Activated B cell treated with CpG ODN at 0.5 μM for 24 hours (primary cell): ENCODE measurements at regions of chr19 and their contacts with region 1.

Region 1: DNA sequence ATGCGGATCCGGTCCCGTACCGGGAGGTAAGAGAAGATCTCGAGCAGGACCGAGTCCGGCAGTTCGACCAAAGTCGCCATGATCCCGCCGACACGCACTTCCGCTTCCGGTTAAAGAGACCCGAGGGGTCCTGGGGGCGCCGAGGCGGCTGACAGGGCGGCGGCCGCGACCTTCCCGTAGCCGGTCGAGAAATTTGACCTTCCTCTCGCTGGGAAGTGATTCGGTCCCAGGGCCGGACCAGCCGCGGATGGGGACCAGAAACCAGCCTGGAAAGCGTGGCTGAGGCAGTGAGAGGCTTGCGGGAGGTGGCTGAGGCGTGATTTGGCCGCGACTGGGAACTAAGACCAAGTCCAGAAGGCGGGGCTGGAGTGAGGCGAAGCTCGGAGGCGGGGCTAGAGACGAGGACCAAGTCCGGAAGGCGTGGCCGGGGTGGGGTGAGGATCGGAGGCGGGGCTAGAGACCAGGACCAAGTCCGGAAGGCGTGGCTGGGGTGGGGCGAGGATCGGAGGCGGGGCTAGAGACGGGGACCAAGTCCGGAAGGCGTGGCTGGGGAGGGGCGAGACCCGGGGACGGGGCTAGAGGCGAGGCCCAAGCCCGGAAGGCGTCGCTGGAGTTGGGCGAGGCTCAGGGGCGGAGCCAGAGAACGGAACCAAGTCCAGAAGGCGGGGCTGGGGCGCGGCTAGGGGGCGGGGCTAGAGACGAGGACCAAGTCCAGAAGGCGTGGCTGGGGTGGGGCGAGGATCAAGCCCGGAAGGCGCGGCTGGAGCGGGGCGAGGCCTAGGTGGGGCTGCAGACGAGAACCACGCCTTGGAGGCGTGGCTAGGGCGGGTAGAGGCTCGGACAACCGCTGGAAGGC is at the start of gene FBXL12:
- DNase-seq: peak; percentile 100
- ATAC-seq: peak; percentile 87
- H3K4me3 Mint-ChIP-seq: peak within 1 kb of the TSS; percentile 94
- H3K27ac Mint-ChIP-seq: peak within 1 kb of the TSS; percentile 92
- H3K4me1 Mint-ChIP-seq: peaks cover 24% of the 10 kb centered on the region
- H3K27me3 Mint-ChIP-seq: no peaks in the 10 kb centered on the region
- CTCF ChIP-seq: no peak
- total RNA-seq, gene FBXL12: 34.6 and 41.9 TPM in 2 replicates

Region 2: DNA sequence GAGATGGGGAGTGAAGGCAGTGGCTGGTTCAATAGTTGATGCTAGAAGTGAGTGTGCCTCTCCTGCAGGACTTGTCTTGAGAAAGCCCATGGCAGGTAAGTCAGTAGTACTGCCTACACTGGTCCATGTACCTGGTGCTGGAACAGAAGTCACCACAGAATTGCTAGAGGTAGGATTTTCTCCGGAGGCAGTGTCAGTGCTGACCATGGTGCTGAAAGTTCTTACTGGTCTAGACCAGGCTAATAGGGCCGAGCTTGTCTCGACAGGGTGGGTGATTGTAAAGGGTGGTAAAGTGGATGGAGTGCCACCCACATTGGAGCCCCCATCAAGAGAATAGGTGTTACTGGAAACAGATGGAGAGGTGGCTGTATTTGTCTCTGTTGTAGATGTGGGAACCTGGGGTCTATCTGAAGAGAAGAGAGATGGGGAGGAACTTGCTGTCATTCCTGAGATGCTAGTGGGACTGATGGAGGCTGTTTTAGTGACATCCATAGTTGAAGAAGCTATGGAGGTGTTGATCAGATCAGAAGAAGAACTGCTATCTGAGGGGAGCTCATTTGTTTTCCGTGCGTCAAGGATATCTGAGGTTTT is 845.4 kb before region 1 on chr19:
- CTCF ChIA-PET with region 1: no interaction called
- POLR2A ChIA-PET with region 1: interaction called, 13 read pairs
- intact Hi-C with region 1: no loop called
- DNase-seq: no peak
- ATAC-seq: no peak
- H3K4me3 Mint-ChIP-seq: no peak overlapping the region
- H3K27ac Mint-ChIP-seq: no peak overlapping the region
- H3K4me1 Mint-ChIP-seq: no peaks in the 10 kb centered on the region
- H3K27me3 Mint-ChIP-seq: peaks cover 2% of the 10 kb centered on the region
- CTCF ChIP-seq: no peak

Region 3: DNA sequence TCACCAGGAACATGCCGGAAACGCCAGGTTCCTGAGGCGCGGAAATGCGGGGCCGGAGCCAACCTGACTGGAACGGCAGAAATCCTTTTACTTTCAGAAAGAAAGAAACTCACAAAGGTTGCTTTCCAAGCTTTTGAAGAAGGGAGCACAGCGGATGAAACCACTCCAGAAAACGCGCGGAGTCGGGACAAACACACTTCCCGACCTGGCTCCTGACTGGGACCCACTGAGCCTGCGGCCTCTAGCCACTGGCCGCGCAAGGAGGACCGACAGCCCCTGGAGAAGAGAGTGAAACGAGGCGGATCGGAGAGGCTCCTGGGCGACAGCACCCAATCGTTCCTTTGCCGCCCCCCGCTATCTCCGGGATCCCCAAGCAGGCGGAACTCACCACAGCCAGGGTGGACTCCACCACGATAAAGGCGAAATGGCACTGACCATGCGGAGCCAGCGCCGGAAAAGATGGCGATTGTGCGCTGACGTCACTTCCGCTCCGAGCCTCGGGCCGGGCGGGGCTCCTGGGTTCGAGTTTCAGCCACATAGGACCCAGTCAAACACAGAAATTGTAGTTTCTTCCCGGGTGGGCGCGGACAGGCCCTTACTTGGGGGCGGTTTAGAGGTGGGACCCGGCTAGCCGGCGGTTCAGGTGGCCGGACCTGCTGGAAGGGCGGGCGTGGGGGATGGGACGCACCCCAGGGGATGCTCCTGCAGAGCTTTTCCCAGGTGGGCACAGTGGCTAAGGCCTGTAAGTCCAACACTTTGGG is 234.7 kb before region 1 on chr19 and contains the start of gene ZNF121:
- CTCF ChIA-PET with region 1: no interaction called
- POLR2A ChIA-PET with region 1: interaction called, 7 read pairs
- intact Hi-C with region 1: loop called (anchors 1 kb)
- DNase-seq: peak; percentile 80
- ATAC-seq: peak; percentile 84
- H3K4me3 Mint-ChIP-seq: peak within 1 kb of the TSS; percentile 95
- H3K27ac Mint-ChIP-seq: peak within 1 kb of the TSS; percentile 94
- H3K4me1 Mint-ChIP-seq: peaks cover 46% of the 10 kb centered on the region
- H3K27me3 Mint-ChIP-seq: peaks cover 6% of the 10 kb centered on the region
- CTCF ChIP-seq: no peak
- total RNA-seq, gene ZNF121: 53.7 and 57.0 TPM in 2 replicates

Region 4: GRCh38 chr19:9768175-9769112 is 50.5 kb before region 1 on chr19 and contains the start of gene ZNF846:
- CTCF ChIA-PET with region 1: no interaction called
- POLR2A ChIA-PET with region 1: interaction called, 16 read pairs
- intact Hi-C with region 1: loop called (anchors 1 kb)
- DNase-seq: peak; percentile 91
- ATAC-seq: peak; percentile 98
- H3K4me3 Mint-ChIP-seq: peak within 1 kb of the TSS; percentile 90
- H3K27ac Mint-ChIP-seq: peak within 1 kb of the TSS; percentile 94
- H3K4me1 Mint-ChIP-seq: peaks cover 9% of the 10 kb centered on the region
- H3K27me3 Mint-ChIP-seq: no peaks in the 10 kb centered on the region
- CTCF ChIP-seq: no peak
- total RNA-seq, gene ZNF846: 7.9 and 10.7 TPM in 2 replicates

Region 5: GRCh38 chr19:9834726-9835506 is 16.0 kb after region 1 on chr19 and contains the start of gene PIN1:
- CTCF ChIA-PET with region 1: no interaction called
- POLR2A ChIA-PET with region 1: interaction called, 11 read pairs
- intact Hi-C with region 1: loop called (anchors 1 kb)
- DNase-seq: peak; percentile 98
- ATAC-seq: peak; percentile 95
- H3K4me3 Mint-ChIP-seq: peak within 1 kb of the TSS; percentile 93
- H3K27ac Mint-ChIP-seq: peak within 1 kb of the TSS; percentile 94
- H3K4me1 Mint-ChIP-seq: peaks cover 12% of the 10 kb centered on the region
- H3K27me3 Mint-ChIP-seq: no peaks in the 10 kb centered on the region
- CTCF ChIP-seq: no peak
- total RNA-seq, gene PIN1: 57.1 and 66.0 TPM in 2 replicates

Region 6: DNA sequence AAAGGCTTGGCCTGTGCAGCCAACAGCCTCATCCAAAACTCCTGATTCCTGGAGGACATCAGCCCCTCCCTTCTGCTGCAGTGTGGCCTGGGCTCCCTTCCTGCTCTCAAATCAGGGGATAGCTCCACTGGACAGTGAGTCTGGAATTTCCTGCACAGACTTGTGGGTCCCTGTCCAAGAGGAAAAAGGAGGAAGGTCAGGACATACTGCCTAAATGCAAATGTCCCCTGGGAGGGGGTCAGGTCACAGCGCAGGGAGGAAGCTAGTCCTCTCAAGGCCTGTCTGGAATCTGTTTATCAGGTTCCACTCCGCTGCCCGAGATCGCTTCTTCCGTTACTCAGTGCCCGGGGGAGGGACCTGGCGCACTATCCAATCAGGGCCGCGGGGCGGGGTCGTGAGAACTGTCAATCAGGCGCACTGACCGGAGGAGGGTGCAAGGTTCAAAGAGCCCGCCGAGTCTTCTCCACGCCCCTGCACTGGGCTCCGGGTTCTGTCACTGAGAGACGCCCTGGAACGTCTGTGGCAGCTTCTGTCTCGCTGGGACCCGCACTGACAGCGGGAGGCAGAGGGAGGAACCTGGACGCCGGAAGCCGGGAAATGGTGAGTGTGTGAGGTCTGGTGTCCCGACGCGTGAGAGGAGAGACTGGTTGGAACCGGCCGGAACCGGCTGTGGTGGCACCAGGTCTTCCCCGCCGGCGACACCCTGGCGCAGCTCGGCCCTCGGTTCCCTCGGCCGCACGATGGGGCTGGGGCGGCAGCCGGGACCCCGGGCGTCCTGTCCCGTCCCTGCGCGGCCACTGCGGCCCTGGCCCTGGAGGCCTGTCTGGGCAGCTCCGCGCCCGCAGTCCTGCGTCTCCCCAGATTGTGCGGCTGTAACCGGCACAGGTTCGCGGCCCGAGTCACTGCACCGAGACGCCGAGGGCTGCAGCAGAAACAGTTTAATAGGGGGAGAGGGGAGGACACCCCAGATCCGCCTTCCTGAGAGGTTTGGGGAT is 1947.9 kb after region 1 on chr19 and contains the start of gene ZNF441:
- CTCF ChIA-PET with region 1: no interaction called
- POLR2A ChIA-PET with region 1: interaction called, 10 read pairs
- intact Hi-C with region 1: no loop called
- DNase-seq: peak; percentile 87
- ATAC-seq: peak; percentile 95
- H3K4me3 Mint-ChIP-seq: peak within 1 kb of the TSS; percentile 99
- H3K27ac Mint-ChIP-seq: peak within 1 kb of the TSS; percentile 96
- H3K4me1 Mint-ChIP-seq: peaks cover 25% of the 10 kb centered on the region
- H3K27me3 Mint-ChIP-seq: peaks cover 2% of the 10 kb centered on the region
- CTCF ChIP-seq: no peak
- total RNA-seq, gene ZNF441: 23.3 and 23.9 TPM in 2 replicates